ENCODE measurements at regions of chr5 and their contacts with region 1.

Region 1: GRCh38 chr5:164013077-164013670 is 507.8 kb downstream of the MAT2B start:
- DNase-seq: peak; percentile 19
- ATAC-seq: peak; percentile 85
- H3K4me3 ChIP-seq: no peak overlapping the region
- H3K27ac ChIP-seq: no peak overlapping the region
- H3K4me1 ChIP-seq: no peaks in the 10 kb centered on the region
- H3K27me3 ChIP-seq: no peaks in the 10 kb centered on the region
- CTCF ChIP-seq: peak; percentile 51 to 83 (median 60); a peak in 5 of 6 replicates
- EP300 ChIP-seq: no peak
- POLR2A ChIP-seq: no peak
- RAD21 ChIP-seq: peak; percentile 93

Region 2: DNA sequence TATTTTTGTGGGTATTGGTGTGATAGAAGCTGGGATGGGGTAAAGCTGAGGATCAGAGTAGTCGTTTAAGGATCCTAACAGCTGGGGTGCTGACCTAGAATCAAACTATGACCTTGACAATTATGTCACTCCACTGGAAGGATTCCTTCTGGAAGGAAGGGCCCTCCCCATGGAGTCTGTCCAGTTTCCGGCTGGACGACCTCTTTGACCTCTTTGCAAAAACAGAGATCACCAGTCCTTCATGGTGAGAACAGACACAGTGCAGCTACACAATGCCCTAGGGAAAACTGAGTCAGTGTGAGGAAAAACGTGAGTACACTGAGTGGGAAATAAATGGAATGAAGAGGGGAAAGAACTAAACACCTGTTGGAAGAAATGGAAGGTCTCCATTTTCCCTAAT is 62.1 kb before region 1 on chr5:
- CTCF ChIA-PET with region 1: no interaction called
- POLR2A ChIA-PET with region 1: no interaction called
- RAD21 ChIA-PET with region 1: no interaction called
- SMC1A ChIA-PET with region 1: no interaction called
- in situ Hi-C with region 1: no loop called
- intact Hi-C with region 1: no loop called
- DNase-seq: no peak
- ATAC-seq: no peak
- H3K4me3 ChIP-seq: no peak overlapping the region
- H3K27ac ChIP-seq: no peak overlapping the region
- H3K4me1 ChIP-seq: no peaks in the 10 kb centered on the region
- H3K27me3 ChIP-seq: no peaks in the 10 kb centered on the region
- CTCF ChIP-seq: no peak
- EP300 ChIP-seq: no peak
- POLR2A ChIP-seq: no peak
- RAD21 ChIP-seq: no peak

Region 3: GRCh38 chr5:164002628-164003027 is 10.5 kb before region 1 on chr5:
- CTCF ChIA-PET with region 1: interaction called, 30 read pairs
- POLR2A ChIA-PET with region 1: no interaction called
- RAD21 ChIA-PET with region 1: interaction called, 15 read pairs
- SMC1A ChIA-PET with region 1: interaction called, 21 read pairs
- in situ Hi-C with region 1: no loop called
- intact Hi-C with region 1: no loop called
- DNase-seq: no peak
- ATAC-seq: peak; percentile 90
- H3K4me3 ChIP-seq: no peak overlapping the region
- H3K27ac ChIP-seq: no peak overlapping the region
- H3K4me1 ChIP-seq: no peaks in the 10 kb centered on the region
- H3K27me3 ChIP-seq: no peaks in the 10 kb centered on the region
- CTCF ChIP-seq: no peak
- EP300 ChIP-seq: no peak
- POLR2A ChIP-seq: no peak
- RAD21 ChIP-seq: no peak

Region 4: GRCh38 chr5:164475339-164475977 is 462.3 kb after region 1 on chr5:
- CTCF ChIA-PET with region 1: interaction called, 38 read pairs
- POLR2A ChIA-PET with region 1: no interaction called
- RAD21 ChIA-PET with region 1: interaction called, 13 read pairs
- SMC1A ChIA-PET with region 1: interaction called, 46 read pairs
- in situ Hi-C with region 1: no loop called
- intact Hi-C with region 1: loop called (anchors 10 kb)
- DNase-seq: no peak
- ATAC-seq: peak; percentile 54; the same call in 1 of the 3 replicates
- H3K4me3 ChIP-seq: no peak overlapping the region
- H3K27ac ChIP-seq: no peak overlapping the region
- H3K4me1 ChIP-seq: no peaks in the 10 kb centered on the region
- H3K27me3 ChIP-seq: no peaks in the 10 kb centered on the region
- CTCF ChIP-seq: peak; percentile 14 to 43 (median 20); a peak in 3 of 6 replicates
- EP300 ChIP-seq: no peak
- POLR2A ChIP-seq: no peak
- RAD21 ChIP-seq: peak; percentile 60

Region 5: GRCh38 chr5:164672931-164673694 is 659.9 kb after region 1 on chr5:
- CTCF ChIA-PET with region 1: interaction called, 9 read pairs
- POLR2A ChIA-PET with region 1: no interaction called
- RAD21 ChIA-PET with region 1: interaction called, 9 read pairs
- SMC1A ChIA-PET with region 1: interaction called, 3 read pairs
- in situ Hi-C with region 1: no loop called
- intact Hi-C with region 1: loop called (anchors 2 kb)
- DNase-seq: no peak
- ATAC-seq: peak; percentile 68
- H3K4me3 ChIP-seq: no peak overlapping the region
- H3K27ac ChIP-seq: no peak overlapping the region
- H3K4me1 ChIP-seq: no peaks in the 10 kb centered on the region
- H3K27me3 ChIP-seq: no peaks in the 10 kb centered on the region
- CTCF ChIP-seq: peak in 1 of 3 experiments; percentile 32; a peak in 1 of 6 replicates
- EP300 ChIP-seq: no peak
- POLR2A ChIP-seq: no peak
- RAD21 ChIP-seq: peak; percentile 31; the same call in 1 of the 2 replicates

Region 6: GRCh38 chr5:165209086-165209727 is 1196.0 kb after region 1 on chr5:
- CTCF ChIA-PET with region 1: interaction called, 4 read pairs
- POLR2A ChIA-PET with region 1: no interaction called
- RAD21 ChIA-PET with region 1: no interaction called
- SMC1A ChIA-PET with region 1: interaction called, 3 read pairs
- in situ Hi-C with region 1: loop called (anchors 25 kb)
- intact Hi-C with region 1: loop called (anchors 2 kb)
- DNase-seq: no peak
- ATAC-seq: no peak
- H3K4me3 ChIP-seq: no peak overlapping the region
- H3K27ac ChIP-seq: no peak overlapping the region
- H3K4me1 ChIP-seq: no peaks in the 10 kb centered on the region
- H3K27me3 ChIP-seq: no peaks in the 10 kb centered on the region
- CTCF ChIP-seq: peak; percentile 50 to 53 (median 53); a peak in 5 of 6 replicates
- EP300 ChIP-seq: no peak
- POLR2A ChIP-seq: no peak
- RAD21 ChIP-seq: peak; percentile 60

Region 7: GRCh38 chr5:165457859-165458481 is 1444.8 kb after region 1 on chr5:
- CTCF ChIA-PET with region 1: interaction called, 4 read pairs
- POLR2A ChIA-PET with region 1: no interaction called
- RAD21 ChIA-PET with region 1: no interaction called
- SMC1A ChIA-PET with region 1: no interaction called
- in situ Hi-C with region 1: no loop called
- intact Hi-C with region 1: loop called (anchors 5 kb)
- DNase-seq: no peak
- ATAC-seq: peak; percentile 66
- H3K4me3 ChIP-seq: no peak overlapping the region
- H3K27ac ChIP-seq: no peak overlapping the region
- H3K4me1 ChIP-seq: no peaks in the 10 kb centered on the region
- H3K27me3 ChIP-seq: no peaks in the 10 kb centered on the region
- CTCF ChIP-seq: peak; percentile 39 to 49 (median 44); a peak in 5 of 6 replicates
- EP300 ChIP-seq: no peak
- POLR2A ChIP-seq: no peak
- RAD21 ChIP-seq: peak; percentile 23; the same call in 1 of the 2 replicates

Measured in GM12878 (cell line).